ENCODE measurements at regions of chr22 and their contacts with region 1.

Region 1: GRCh38 chr22:39319270-39320022 is at the start of gene RPL3:
- DNase-seq: peak; percentile 90 to 99
- H3K4me3 ChIP-seq: peak within 1 kb of the TSS; percentile 95 to 99 (median 98)
- H3K27ac ChIP-seq: peak within 1 kb of the TSS; percentile 97
- H3K4me1 ChIP-seq: peaks cover 0 to 15% (median 3%) of the 10 kb centered on the region in 4 experiments; a peak in 6 of 7 replicates
- H3K27me3 ChIP-seq: no peaks in the 10 kb centered on the region
- CTCF ChIP-seq: peak in 2 of 3 experiments; percentile 5 to 12; a peak in 3 of 4 replicates
- EP300 ChIP-seq: peak in 1 of 2 experiments; percentile 46; a peak in 1 of 3 replicates
- POLR2A ChIP-seq: peak; percentile 99 to 100
- RAD21 ChIP-seq: no peak
- total RNA-seq, gene RPL3: 2,801 and 2,865 TPM in 2 replicates

Region 2: DNA sequence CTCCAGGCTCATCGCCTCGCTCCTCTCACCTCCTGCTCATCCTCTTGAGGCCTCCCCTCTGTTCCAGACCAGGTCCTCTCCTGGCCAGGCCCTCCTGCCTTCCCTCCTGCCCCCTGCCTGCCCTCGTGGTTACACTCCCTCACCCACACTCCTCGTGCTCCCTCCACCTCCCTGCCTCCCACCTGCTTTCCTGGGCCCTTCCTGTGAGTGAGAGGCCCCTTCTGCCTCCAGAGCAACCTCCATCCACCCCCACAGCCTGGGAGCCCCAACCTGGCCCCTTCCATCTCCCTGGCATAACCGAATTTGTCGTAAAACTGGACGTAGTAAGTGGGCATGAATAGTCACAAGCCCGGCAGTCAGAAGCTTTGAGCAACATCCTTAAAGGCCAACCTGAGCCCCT is 237.8 kb before region 1 on chr22:
- CTCF ChIA-PET with region 1: no interaction called
- POLR2A ChIA-PET with region 1: no interaction called
- DNase-seq: no peak
- H3K4me3 ChIP-seq: no peak overlapping the region
- H3K27ac ChIP-seq: no peak overlapping the region
- H3K4me1 ChIP-seq: peaks cover 0 to 4% (median 1%) of the 10 kb centered on the region in 4 experiments; a peak in 4 of 7 replicates
- H3K27me3 ChIP-seq: no peaks in the 10 kb centered on the region
- CTCF ChIP-seq: no peak
- EP300 ChIP-seq: no peak
- POLR2A ChIP-seq: no peak
- RAD21 ChIP-seq: no peak

Region 3: GRCh38 chr22:39183991-39184585 is 135.4 kb before region 1 on chr22:
- CTCF ChIA-PET with region 1: interaction called, 5 read pairs
- POLR2A ChIA-PET with region 1: interaction called, 31 read pairs
- DNase-seq: no peak
- H3K4me3 ChIP-seq: no peak overlapping the region
- H3K27ac ChIP-seq: no peak overlapping the region
- H3K4me1 ChIP-seq: peaks cover 0 to 18% (median 7%) of the 10 kb centered on the region in 4 experiments; a peak in 6 of 7 replicates
- H3K27me3 ChIP-seq: no peaks in the 10 kb centered on the region
- CTCF ChIP-seq: no peak
- EP300 ChIP-seq: no peak
- POLR2A ChIP-seq: no peak; a peak in 1 of 3 replicates
- RAD21 ChIP-seq: no peak

Region 4: GRCh38 chr22:39253435-39254070 is 65.9 kb before region 1 on chr22:
- CTCF ChIA-PET with region 1: interaction called, 3 read pairs
- POLR2A ChIA-PET with region 1: interaction called, 40 read pairs
- DNase-seq: no peak
- H3K4me3 ChIP-seq: peak overlapping the region in 1 of 4 experiments; percentile 15; a peak in 1 of 8 replicates
- H3K27ac ChIP-seq: no peak overlapping the region
- H3K4me1 ChIP-seq: peaks cover 0 to 25% (median 19%) of the 10 kb centered on the region in 4 experiments; a peak in 6 of 7 replicates
- H3K27me3 ChIP-seq: peaks cover 0 to 14% (median 7%) of the 10 kb centered on the region in 4 experiments; a peak in 4 of 7 replicates
- CTCF ChIP-seq: no peak
- EP300 ChIP-seq: no peak
- POLR2A ChIP-seq: no peak
- RAD21 ChIP-seq: no peak

Region 5: GRCh38 chr22:39343259-39344048 is 24.0 kb after region 1 on chr22:
- CTCF ChIA-PET with region 1: interaction called, 6 read pairs
- POLR2A ChIA-PET with region 1: interaction called, 472 read pairs
- DNase-seq: peak; percentile 34 to 76
- H3K4me3 ChIP-seq: peak overlapping the region in 1 of 4 experiments; percentile 3; a peak in 1 of 8 replicates
- H3K27ac ChIP-seq: no peak overlapping the region
- H3K4me1 ChIP-seq: peaks cover 2 to 3% (median 3%) of the 10 kb centered on the region in 4 experiments; a peak in 4 of 7 replicates
- H3K27me3 ChIP-seq: no peaks in the 10 kb centered on the region
- CTCF ChIP-seq: peak; percentile 74 to 94 (median 75)
- EP300 ChIP-seq: no peak
- POLR2A ChIP-seq: no peak
- RAD21 ChIP-seq: peak; percentile 63 to 74

Region 6: DNA sequence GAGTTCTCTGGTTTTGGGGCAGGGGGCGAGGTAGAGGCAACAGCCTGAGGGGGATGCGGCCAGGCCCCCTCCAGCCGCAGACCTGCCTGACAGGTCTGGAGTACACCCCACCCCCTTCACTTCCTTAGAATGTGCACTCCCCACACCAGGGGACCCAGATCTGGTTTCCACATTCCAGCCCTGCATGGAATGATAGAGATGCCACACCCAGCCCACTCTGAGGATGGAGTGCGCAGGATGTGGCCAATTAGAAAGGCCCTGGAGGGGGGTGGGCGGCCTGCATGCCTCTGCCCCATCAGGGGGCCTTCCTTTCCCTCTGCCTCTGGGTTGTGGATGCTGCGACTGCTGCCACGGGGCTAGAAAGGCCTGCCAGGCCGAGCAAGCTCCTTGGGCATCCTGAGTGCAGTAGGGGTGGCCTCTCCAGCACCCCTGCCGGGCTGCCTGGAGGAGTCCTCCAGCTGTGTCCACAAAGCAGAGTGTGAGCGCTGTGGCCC is 109.2 kb after region 1 on chr22:
- CTCF ChIA-PET with region 1: no interaction called
- POLR2A ChIA-PET with region 1: interaction called, 48 read pairs
- DNase-seq: peak; percentile 80 to 85
- H3K4me3 ChIP-seq: peak overlapping the region in 2 of 4 experiments; percentile 19 to 32; a peak in 2 of 8 replicates
- H3K27ac ChIP-seq: peak overlapping the region; percentile 46; the same call in 1 of the 2 replicates
- H3K4me1 ChIP-seq: peaks cover 8 to 23% (median 17%) of the 10 kb centered on the region in 4 experiments
- H3K27me3 ChIP-seq: no peaks in the 10 kb centered on the region
- CTCF ChIP-seq: peak in 2 of 3 experiments; percentile 43 to 52; a peak in 3 of 4 replicates
- EP300 ChIP-seq: peak; percentile 27 to 90; a peak in 2 of 3 replicates
- POLR2A ChIP-seq: peak in 1 of 2 experiments; percentile 50; a peak in 1 of 3 replicates
- RAD21 ChIP-seq: peak; percentile 38 to 43

Region 7: GRCh38 chr22:39490135-39490798 is 170.8 kb after region 1 on chr22:
- CTCF ChIA-PET with region 1: interaction called, 3 read pairs
- POLR2A ChIA-PET with region 1: interaction called, 10 read pairs
- DNase-seq: peak; percentile 39 to 81
- H3K4me3 ChIP-seq: no peak overlapping the region
- H3K27ac ChIP-seq: no peak overlapping the region
- H3K4me1 ChIP-seq: peaks cover 0 to 6% (median 4%) of the 10 kb centered on the region in 4 experiments; a peak in 4 of 7 replicates
- H3K27me3 ChIP-seq: peaks cover 0 to 13% (median 3%) of the 10 kb centered on the region in 4 experiments; a peak in 4 of 7 replicates
- CTCF ChIP-seq: no peak
- EP300 ChIP-seq: no peak
- POLR2A ChIP-seq: no peak
- RAD21 ChIP-seq: no peak